Activated T-helper 1 cell treated with anti-CD3 and anti-CD28 coated beads, Interleukin-12 subunit alpha, Interleukin-12 subunit beta, Interleukin-2, Interleukin-4 antibody, amounts not matched to agents 30 ng/mL and 10 ng/mL and 1 ng/mL, durations not matched to agents 14 hours and 24 hours and 36 hours (primary cell): ENCODE measurements at regions of chr5 and their contacts with region 1.

Region 1: DNA sequence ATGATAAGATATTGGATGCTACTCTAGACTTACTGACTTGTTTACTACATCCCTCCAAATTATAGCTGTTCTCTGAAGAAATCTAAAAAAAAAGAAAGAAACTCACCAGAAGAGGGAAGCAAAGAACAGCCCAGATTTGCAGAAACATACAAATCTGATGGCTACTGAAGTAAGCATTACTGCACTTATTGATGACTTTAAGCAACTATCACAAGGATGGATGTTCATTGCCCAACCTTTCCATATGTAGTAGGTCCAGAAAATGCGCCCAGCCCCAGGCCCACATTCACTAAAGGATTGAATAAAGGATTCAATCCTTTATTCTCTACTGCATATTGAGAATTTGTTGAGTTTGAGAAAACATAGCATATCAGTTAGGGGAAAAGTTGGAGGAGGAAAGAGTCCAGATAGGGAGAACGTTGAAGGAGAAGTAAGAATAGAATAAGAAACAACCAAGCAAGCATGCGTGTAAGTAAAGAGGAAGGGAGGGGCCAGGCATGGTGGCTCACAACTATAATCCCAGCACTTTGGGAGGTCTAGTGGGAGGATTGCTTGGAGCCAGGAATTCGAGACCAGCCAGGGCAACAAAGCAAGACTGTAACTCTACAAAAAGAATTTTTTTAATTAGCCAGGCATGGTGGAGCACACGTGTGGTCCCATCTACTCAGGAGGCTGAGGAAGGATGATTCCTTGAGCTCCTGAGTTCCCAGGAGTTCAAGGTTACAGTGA is 33.8 kb upstream of the DTWD2 start:
- DNase-seq: no peak
- H3K4me3 Mint-ChIP-seq: no peak overlapping the region
- H3K27ac Mint-ChIP-seq: no peak overlapping the region
- H3K4me1 Mint-ChIP-seq: peaks cover 4% of the 10 kb centered on the region
- H3K27me3 Mint-ChIP-seq: peaks cover 1% of the 10 kb centered on the region

Region 2: GRCh38 chr5:119036101-119036762 is 14.1 kb after region 1 on chr5:
- intact Hi-C with region 1: no loop called
- DNase-seq: no peak
- H3K4me3 Mint-ChIP-seq: no peak overlapping the region
- H3K27ac Mint-ChIP-seq: no peak overlapping the region
- H3K4me1 Mint-ChIP-seq: peaks cover 29% of the 10 kb centered on the region
- H3K27me3 Mint-ChIP-seq: peaks cover 2% of the 10 kb centered on the region

Region 3: DNA sequence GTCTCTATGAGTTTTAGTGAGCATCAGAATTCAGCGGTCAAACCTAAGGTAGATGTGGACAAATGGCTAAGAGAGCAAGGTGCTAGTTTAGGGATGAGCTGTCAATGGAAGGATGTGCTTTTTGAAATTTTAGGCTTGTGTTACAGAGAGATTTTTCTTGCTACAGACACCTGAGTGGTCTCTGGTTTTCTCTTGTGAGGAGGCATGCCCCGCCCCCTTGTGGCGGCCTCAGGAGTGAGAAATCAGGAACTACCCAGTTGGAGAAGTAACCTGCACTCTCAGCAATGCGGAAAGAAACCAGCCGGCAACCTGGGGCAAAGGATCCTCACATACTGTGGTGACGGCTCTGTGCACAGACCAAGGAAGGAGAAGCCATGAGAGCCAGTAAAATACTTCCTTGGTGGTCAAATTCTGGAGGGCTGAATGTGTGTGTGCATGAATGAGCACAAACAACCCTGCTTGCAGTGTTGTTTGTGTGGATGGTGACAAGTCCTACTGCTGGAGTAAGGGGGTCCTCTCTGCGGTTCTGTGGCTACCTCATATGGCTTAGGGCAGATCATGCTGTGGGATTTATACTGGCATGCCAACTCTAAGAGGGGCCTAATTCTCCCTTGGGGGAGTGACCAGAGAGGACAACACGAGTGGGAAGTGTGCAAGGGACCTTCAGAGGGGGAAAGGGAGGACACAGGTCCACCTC is 413.4 kb after region 1 on chr5:
- intact Hi-C with region 1: loop called (anchors 1 kb)
- DNase-seq: peak; percentile 43
- H3K4me3 Mint-ChIP-seq: no peak overlapping the region
- H3K27ac Mint-ChIP-seq: no peak overlapping the region
- H3K4me1 Mint-ChIP-seq: peaks cover 26% of the 10 kb centered on the region
- H3K27me3 Mint-ChIP-seq: peaks cover 12% of the 10 kb centered on the region